H1 (cell line): ENCODE measurements at regions of chr3 and their contacts with region 1.

Region 1: DNA sequence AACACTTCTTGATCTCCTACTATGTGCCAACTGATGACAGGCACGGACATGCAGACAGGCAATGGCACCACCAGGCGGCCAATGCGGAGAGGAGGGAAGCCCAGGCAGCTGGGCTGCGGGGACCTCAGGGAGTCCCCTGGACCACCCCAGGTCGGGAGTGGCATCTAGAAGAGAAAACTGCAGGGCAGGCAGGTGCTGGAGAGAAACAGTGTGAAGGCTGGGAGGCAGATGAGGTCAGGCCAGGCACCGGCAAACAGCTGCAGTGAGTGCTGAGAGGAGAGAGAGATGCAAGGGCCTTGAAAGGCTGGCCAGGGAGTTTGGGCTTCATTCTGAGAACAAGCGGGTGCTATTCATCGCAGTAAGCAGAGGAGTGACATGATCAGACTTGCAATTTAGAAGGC is 29.1 kb downstream of the SLC6A1 start:
- DNase-seq: peak in 1 of 2 experiments; percentile 54
- H3K4me3 ChIP-seq: no peak overlapping the region
- H3K27ac ChIP-seq: no peak overlapping the region
- H3K4me1 ChIP-seq: no peaks in the 10 kb centered on the region
- H3K27me3 ChIP-seq: peaks cover 0 to 6% (median under 1%) of the 10 kb centered on the region in 4 experiments; a peak in 2 of 7 replicates
- CTCF ChIP-seq: peak; percentile 32 to 63 (median 52)
- EP300 ChIP-seq: no peak
- POLR2A ChIP-seq: no peak
- RAD21 ChIP-seq: peak; percentile 55 to 61

Region 2: GRCh38 chr3:11050666-11051323 is 29.2 kb after region 1 on chr3:
- CTCF ChIA-PET with region 1: interaction called, 12 read pairs
- POLR2A ChIA-PET with region 1: no interaction called
- DNase-seq: no peak
- H3K4me3 ChIP-seq: no peak overlapping the region
- H3K27ac ChIP-seq: no peak overlapping the region
- H3K4me1 ChIP-seq: no peaks in the 10 kb centered on the region
- H3K27me3 ChIP-seq: peaks cover 0 to 3% (median 0%) of the 10 kb centered on the region in 4 experiments; a peak in 1 of 7 replicates
- CTCF ChIP-seq: no peak
- EP300 ChIP-seq: no peak
- POLR2A ChIP-seq: no peak
- RAD21 ChIP-seq: no peak

Region 3: GRCh38 chr3:11120091-11120805 is 98.6 kb after region 1 on chr3:
- CTCF ChIA-PET with region 1: no interaction called
- POLR2A ChIA-PET with region 1: no interaction called
- DNase-seq: no peak
- H3K4me3 ChIP-seq: no peak overlapping the region
- H3K27ac ChIP-seq: no peak overlapping the region
- H3K4me1 ChIP-seq: peaks cover 0 to 5% (median 0%) of the 10 kb centered on the region in 4 experiments; a peak in 1 of 7 replicates
- H3K27me3 ChIP-seq: no peaks in the 10 kb centered on the region
- CTCF ChIP-seq: no peak
- EP300 ChIP-seq: no peak
- POLR2A ChIP-seq: no peak
- RAD21 ChIP-seq: no peak